Caco-2 (cell line): ENCODE measurements at regions of chr12 and their contacts with region 1.

Region 1: DNA sequence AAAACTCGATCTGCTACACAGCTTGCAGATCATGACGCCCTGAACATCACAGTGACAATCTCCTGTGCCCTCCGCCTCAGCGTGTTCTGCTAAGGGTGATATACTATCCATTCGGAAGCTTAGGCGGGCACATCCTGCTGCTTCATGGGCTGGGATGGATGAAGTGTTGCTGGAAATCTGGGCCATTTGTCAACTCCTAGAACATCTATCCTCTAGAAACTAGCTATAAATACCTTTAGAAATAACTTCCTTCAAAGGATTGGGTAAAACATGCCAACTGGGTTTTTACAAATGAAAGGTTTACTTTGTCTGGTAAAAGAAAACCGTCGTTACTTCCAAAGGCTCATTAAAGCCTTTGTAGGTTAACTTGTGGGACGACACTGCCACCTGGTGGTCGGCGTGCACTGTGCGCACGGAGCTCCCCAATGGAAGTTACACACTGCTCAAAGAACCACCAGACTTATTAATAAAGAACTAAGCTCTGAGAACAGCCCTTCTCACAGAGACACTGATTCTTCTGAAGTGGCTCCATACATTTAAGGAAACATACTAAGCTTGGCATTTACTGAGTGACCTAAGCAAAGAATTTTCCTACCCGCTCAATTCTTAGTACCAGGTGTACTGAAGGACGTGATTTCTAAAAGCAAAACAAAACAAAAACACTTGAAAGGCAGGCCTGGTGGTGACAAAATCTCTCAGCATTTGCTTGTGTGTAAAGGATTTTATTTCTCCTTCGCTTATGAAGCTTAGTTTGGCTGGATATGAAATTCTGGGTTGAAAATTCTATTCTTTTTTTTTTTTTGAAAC is 21.6 kb upstream of the CACNA2D4 start:
- DNase-seq: peak; percentile 84 to 91
- H3K4me3 ChIP-seq: no peak overlapping the region
- H3K4me3 Mint-ChIP-seq: no peak overlapping the region
- H3K27ac Mint-ChIP-seq: no peak overlapping the region
- H3K4me1 ChIP-seq: no peaks in the 10 kb centered on the region
- H3K4me1 Mint-ChIP-seq: no peaks in the 10 kb centered on the region
- H3K27me3 ChIP-seq: no peaks in the 10 kb centered on the region
- H3K27me3 Mint-ChIP-seq: no peaks in the 10 kb centered on the region
- CTCF ChIP-seq: peak; percentile 98 to 99

Region 2: GRCh38 chr12:1533602-1534304 is 406.3 kb before region 1 on chr12:
- CTCF ChIA-PET with region 1: no interaction called
- POLR2A ChIA-PET with region 1: no interaction called
- intact Hi-C with region 1: no loop called
- DNase-seq: no peak
- H3K4me3 ChIP-seq: no peak overlapping the region
- H3K4me3 Mint-ChIP-seq: no peak overlapping the region
- H3K27ac Mint-ChIP-seq: no peak overlapping the region
- H3K4me1 ChIP-seq: peaks cover 4% of the 10 kb centered on the region; the same call in 1 of the 2 replicates
- H3K4me1 Mint-ChIP-seq: peaks cover 6% of the 10 kb centered on the region
- H3K27me3 ChIP-seq: peaks cover 10% of the 10 kb centered on the region
- H3K27me3 Mint-ChIP-seq: peaks cover 27% of the 10 kb centered on the region
- CTCF ChIP-seq: no peak

Region 3: DNA sequence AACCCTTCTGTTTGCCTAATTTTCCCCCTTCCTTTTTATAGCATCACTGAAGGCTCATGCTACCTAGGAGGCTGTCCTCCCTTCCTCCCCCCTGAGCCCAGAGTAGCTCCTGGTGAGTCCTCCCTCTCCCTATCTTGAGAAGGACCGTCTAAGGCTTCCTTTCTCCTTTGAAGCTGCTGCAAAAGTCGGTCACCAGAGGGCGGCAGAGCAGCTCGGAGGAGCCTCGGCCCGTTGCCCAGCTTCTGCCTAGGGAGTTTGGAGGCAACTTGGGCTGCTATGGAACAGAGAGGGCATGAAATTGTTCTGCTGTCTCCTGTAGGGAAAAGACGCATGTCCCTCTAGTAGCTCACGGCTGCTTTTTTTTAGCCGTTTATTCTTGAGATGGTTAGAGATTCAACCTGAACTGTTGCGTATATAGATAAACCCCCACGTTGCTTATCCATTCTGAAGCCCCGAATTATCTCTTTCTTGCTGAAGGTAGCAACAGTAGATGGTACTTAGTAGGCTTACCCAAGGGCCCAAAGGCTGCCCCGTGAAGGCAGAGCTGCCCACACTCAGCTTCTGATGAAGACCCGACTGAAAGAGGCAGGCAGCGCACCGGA is 305.3 kb before region 1 on chr12:
- CTCF ChIA-PET with region 1: interaction called, 40 read pairs
- POLR2A ChIA-PET with region 1: no interaction called
- intact Hi-C with region 1: loop called (anchors 1 kb)
- DNase-seq: peak; percentile 79 to 87
- H3K4me3 ChIP-seq: no peak overlapping the region
- H3K4me3 Mint-ChIP-seq: no peak overlapping the region
- H3K27ac Mint-ChIP-seq: no peak overlapping the region
- H3K4me1 ChIP-seq: peaks cover 17% of the 10 kb centered on the region
- H3K4me1 Mint-ChIP-seq: peaks cover 16% of the 10 kb centered on the region
- H3K27me3 ChIP-seq: no peaks in the 10 kb centered on the region
- H3K27me3 Mint-ChIP-seq: no peaks in the 10 kb centered on the region
- CTCF ChIP-seq: peak; percentile 93 to 96

Region 4: DNA sequence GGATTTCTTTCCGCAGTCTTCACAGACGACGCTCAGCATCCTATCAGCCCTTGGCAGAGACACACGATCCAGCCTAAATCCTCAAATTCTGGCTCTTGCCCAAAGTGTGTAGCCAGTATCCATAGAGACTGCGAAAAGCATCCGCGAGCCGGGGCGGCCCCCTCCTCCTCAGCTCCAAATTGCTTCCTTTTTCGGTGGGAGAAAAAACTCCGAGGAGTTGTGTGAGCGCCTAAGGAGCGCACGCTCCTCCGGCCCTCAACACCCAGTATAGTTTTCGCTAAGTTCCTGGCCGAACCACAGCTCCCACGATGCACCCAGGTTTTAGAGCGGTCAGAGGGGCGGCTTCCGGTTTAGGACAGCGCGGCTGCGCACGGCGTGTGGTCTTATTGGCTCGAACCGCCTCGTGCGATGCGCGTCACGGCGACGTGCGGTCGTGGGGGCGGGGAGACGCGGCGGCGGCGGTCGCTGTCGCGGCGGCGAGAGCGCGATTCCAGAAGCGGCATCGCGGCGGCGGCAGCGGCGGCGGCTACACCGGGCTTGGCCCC is 249.4 kb before region 1 on chr12 and contains the start of gene ADIPOR2:
- CTCF ChIA-PET with region 1: interaction called, 10 read pairs
- POLR2A ChIA-PET with region 1: interaction called, 3 read pairs
- intact Hi-C with region 1: loop called (anchors 5 kb)
- DNase-seq: peak; percentile 98 to 99
- H3K4me3 ChIP-seq: peak within 1 kb of the TSS; percentile 76
- H3K4me3 Mint-ChIP-seq: peak within 1 kb of the TSS; percentile 81
- H3K27ac Mint-ChIP-seq: peak within 1 kb of the TSS; percentile 85
- H3K4me1 ChIP-seq: peaks cover 27% of the 10 kb centered on the region
- H3K4me1 Mint-ChIP-seq: peaks cover 12% of the 10 kb centered on the region
- H3K27me3 ChIP-seq: no peaks in the 10 kb centered on the region
- H3K27me3 Mint-ChIP-seq: no peaks in the 10 kb centered on the region
- CTCF ChIP-seq: no peak
- total RNA-seq, gene ADIPOR2: 119 and 125 TPM in 2 replicates

Region 5: GRCh38 chr12:1830981-1831963 is 108.7 kb before region 1 on chr12:
- CTCF ChIA-PET with region 1: interaction called, 13 read pairs
- POLR2A ChIA-PET with region 1: no interaction called
- intact Hi-C with region 1: no loop called
- DNase-seq: peak; percentile 87 to 94
- H3K4me3 ChIP-seq: no peak overlapping the region
- H3K4me3 Mint-ChIP-seq: no peak overlapping the region
- H3K27ac Mint-ChIP-seq: no peak overlapping the region
- H3K4me1 ChIP-seq: peaks cover 6% of the 10 kb centered on the region
- H3K4me1 Mint-ChIP-seq: peaks cover 8% of the 10 kb centered on the region
- H3K27me3 ChIP-seq: no peaks in the 10 kb centered on the region; the same call in none of the 2 replicates
- H3K27me3 Mint-ChIP-seq: peaks cover 26% of the 10 kb centered on the region
- CTCF ChIP-seq: no peak

Region 6: DNA sequence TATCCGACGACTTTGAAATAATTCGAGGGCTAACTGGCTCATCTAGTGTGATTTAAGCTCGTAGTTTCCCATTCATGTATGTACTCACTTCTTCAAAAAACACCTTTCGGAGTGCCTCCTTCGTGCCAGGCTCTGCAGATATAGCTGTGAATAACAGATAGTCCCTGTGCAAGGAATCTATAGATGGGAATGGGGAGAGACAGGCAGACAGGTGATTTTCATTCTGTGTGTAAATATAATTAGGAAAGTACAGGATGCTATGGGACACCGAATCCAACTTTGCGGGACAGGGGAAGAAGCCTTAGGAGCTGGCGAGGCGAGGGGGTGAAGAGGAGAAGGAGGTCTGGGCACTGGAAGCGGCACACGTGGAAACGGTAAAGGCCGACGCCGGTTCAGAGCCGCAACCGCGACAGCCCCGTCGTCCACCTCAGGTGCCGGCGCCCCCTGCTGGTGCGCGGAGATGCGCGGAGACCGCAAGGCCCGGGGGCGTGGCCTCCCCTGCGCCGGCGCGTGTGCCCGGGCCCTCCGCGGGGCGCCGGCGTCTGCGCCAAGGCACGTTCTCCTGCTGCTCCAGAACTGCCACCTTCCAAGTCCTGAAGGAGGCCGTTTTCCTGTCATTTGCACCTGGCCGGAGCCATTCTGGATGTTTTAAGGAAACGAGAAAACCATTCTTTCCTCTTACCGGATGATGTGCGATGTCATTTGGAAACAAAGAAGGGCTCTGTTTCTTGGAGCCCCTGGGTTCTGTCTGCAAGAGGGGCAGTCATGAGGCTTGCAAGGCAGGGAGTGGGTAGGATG is 94.8 kb after region 1 on chr12:
- CTCF ChIA-PET with region 1: no interaction called
- POLR2A ChIA-PET with region 1: no interaction called
- intact Hi-C with region 1: loop called (anchors 1 kb)
- DNase-seq: peak; percentile 80 to 94
- H3K4me3 ChIP-seq: peak overlapping the region; percentile 27; the same call in 1 of the 2 replicates
- H3K4me3 Mint-ChIP-seq: peak overlapping the region; percentile 48
- H3K27ac Mint-ChIP-seq: no peak overlapping the region
- H3K4me1 ChIP-seq: 0 out of 2 replicates have a peak, but pooled peaks cover 3% of the 10 kb centered on the region
- H3K4me1 Mint-ChIP-seq: no peaks in the 10 kb centered on the region
- H3K27me3 ChIP-seq: peaks cover 3% of the 10 kb centered on the region
- H3K27me3 Mint-ChIP-seq: peaks cover 35% of the 10 kb centered on the region
- CTCF ChIP-seq: peak; percentile 88 to 98